PC-3 (cell line): ENCODE measurements at regions of chr4 and their contacts with region 1.

Region 1: GRCh38 chr4:87150498-87151261 is 69.7 kb downstream of the KLHL8 start:
- DNase-seq: peak; percentile 88
- ATAC-seq: peak; percentile 60
- H3K4me3 ChIP-seq: no peak overlapping the region
- H3K27ac ChIP-seq: no peak overlapping the region
- H3K4me1 ChIP-seq: no peaks in the 10 kb centered on the region; the same call in 1 of the 2 replicates
- H3K27me3 ChIP-seq: no peaks in the 10 kb centered on the region
- CTCF ChIP-seq: peak; percentile 88

Region 2: DNA sequence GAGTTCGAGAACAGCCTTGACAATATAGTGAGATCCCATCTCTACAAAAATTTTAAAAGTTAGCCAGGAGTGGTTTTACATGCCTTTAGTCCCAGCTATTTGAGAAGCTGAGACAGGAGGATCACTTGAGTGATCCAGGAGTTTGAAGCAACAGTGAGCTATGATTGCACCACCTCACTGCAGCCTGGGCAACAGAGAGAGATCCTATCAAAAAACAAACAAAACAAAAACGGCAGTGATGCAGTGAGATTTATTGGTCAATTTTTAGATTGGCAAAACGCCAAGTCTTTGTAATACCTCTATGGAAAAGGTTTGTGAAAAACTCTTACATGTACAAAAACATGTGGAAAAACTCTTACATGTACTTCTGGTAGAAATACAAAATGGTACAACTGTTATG is 465.3 kb before region 1 on chr4:
- CTCF ChIA-PET with region 1: no interaction called
- POLR2A ChIA-PET with region 1: no interaction called
- intact Hi-C with region 1: no loop called
- DNase-seq: peak; percentile 44
- ATAC-seq: no peak
- H3K4me3 ChIP-seq: no peak overlapping the region
- H3K27ac ChIP-seq: peak overlapping the region; percentile 12; the same call in 1 of the 2 replicates
- H3K4me1 ChIP-seq: peaks cover 9% of the 10 kb centered on the region; the same call in 1 of the 2 replicates
- H3K27me3 ChIP-seq: no peaks in the 10 kb centered on the region
- CTCF ChIP-seq: no peak

Region 3: GRCh38 chr4:86927843-86928395 is 222.8 kb before region 1 on chr4:
- CTCF ChIA-PET with region 1: interaction called, 18 read pairs
- POLR2A ChIA-PET with region 1: no interaction called
- intact Hi-C with region 1: no loop called
- DNase-seq: peak; percentile 95
- ATAC-seq: peak; percentile 80
- H3K4me3 ChIP-seq: no peak overlapping the region
- H3K27ac ChIP-seq: peak overlapping the region; percentile 80
- H3K4me1 ChIP-seq: peaks cover 21% of the 10 kb centered on the region
- H3K27me3 ChIP-seq: no peaks in the 10 kb centered on the region
- CTCF ChIP-seq: no peak

Region 4: DNA sequence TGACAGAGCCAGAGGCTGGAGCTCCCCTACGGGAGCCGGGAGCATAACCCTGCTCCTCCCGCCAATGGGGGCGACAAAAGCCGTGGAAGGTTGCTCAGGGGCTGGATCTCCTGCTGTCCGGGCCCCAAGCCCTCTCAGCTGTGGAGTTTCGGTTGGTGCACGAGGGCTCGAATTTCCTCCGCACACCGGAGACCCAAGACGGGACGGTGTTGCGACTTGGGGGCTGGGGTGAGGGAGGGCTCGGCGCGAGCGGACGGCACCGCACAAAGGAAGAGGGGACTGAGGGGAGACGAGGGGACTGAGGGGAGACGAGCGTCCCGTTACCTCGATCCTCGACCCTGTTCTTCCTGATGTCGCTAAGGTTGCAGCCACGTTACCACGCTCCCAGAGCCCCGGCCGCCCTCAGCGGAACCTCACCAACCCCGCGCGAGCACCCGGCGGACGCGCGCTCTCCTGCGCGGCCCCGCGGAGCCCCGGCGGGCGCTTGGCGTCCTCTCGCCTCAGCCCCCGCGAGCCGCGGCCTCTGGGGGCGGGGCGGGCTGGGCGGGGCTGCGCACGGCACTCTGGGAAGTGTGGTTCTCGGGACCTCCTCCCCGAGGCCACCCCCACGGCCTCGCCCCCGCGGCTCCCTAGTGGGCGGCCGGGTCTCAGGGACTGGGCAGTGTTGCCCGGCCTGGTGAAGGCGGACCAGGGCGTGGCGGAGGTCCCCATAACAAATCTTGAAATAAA is 69.6 kb after region 1 on chr4 and contains the start of gene KLHL8:
- CTCF ChIA-PET with region 1: no interaction called
- POLR2A ChIA-PET with region 1: interaction called, 4 read pairs
- intact Hi-C with region 1: loop called (anchors 5 kb)
- DNase-seq: peak; percentile 88
- ATAC-seq: peak; percentile 89
- H3K4me3 ChIP-seq: peak within 1 kb of the TSS; percentile 87
- H3K27ac ChIP-seq: peak within 1 kb of the TSS; percentile 56
- H3K4me1 ChIP-seq: peaks cover 12% of the 10 kb centered on the region
- H3K27me3 ChIP-seq: no peaks in the 10 kb centered on the region
- CTCF ChIP-seq: no peak
- total RNA-seq, gene KLHL8: 5.6 and 12.7 TPM in 2 replicates

Region 5: GRCh38 chr4:87235020-87235671 is 84.5 kb after region 1 on chr4:
- CTCF ChIA-PET with region 1: interaction called, 6 read pairs
- POLR2A ChIA-PET with region 1: no interaction called
- intact Hi-C with region 1: loop called (anchors 1 kb)
- DNase-seq: peak; percentile 41
- ATAC-seq: peak; percentile 75
- H3K4me3 ChIP-seq: peak overlapping the region; percentile 73
- H3K27ac ChIP-seq: peak overlapping the region; percentile 57
- H3K4me1 ChIP-seq: peaks cover 27% of the 10 kb centered on the region
- H3K27me3 ChIP-seq: no peaks in the 10 kb centered on the region
- CTCF ChIP-seq: no peak

Region 6: GRCh38 chr4:87240341-87240740 is 89.7 kb after region 1 on chr4:
- CTCF ChIA-PET with region 1: interaction called, 6 read pairs
- POLR2A ChIA-PET with region 1: no interaction called
- intact Hi-C with region 1: loop called (anchors 1 kb)
- DNase-seq: peak; percentile 36
- ATAC-seq: peak; percentile 59
- H3K4me3 ChIP-seq: peak overlapping the region; percentile 38; the same call in 1 of the 2 replicates
- H3K27ac ChIP-seq: peak overlapping the region; percentile 63
- H3K4me1 ChIP-seq: peaks cover 30% of the 10 kb centered on the region
- H3K27me3 ChIP-seq: no peaks in the 10 kb centered on the region
- CTCF ChIP-seq: no peak